Endothelial cell of umbilical vein (primary cell): ENCODE measurements at regions of chr15 and their contacts with region 1.

Region 1: DNA sequence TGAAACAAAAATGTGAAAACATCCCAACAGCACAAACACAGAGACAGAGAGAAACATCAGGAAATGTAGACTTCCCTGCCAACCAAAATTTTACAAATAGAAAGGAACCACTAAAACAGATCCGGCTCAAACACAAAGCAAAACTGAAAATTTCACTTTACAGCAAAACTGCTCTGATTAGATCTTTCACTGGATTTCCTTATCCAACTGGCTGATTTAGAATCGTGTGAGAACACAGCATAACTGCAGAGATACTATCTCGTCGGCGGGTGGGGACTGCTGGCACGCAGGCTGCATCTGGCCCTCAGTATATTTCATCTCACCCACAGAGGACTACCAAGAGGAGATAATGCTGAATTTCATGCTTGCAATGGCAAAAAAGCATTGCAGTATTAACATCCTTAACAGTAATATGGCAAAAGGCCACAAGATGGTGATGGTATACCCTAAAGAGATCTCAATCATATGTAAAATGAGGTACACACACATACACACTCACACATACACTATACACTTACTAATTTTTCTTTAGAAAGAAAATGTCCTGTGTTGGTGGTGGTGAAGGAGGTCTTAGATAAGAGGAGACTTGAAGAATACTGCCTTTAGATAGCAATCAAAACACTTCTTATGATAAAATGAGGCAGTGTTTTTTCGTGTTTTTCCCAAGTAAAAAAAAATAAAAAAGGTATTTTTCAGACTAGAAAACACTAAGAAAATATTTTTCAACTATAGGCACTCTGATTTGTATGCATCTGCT is 10.6 kb upstream of the LEO1 start:
- DNase-seq: peak; percentile 94
- H3K4me3 ChIP-seq: peak overlapping the region; percentile 5 to 77 (median 10)
- H3K27ac ChIP-seq: peak overlapping the region; percentile 96
- H3K4me1 ChIP-seq: peaks cover 20% of the 10 kb centered on the region
- H3K27me3 ChIP-seq: no peaks in the 10 kb centered on the region
- CTCF ChIP-seq: peak in 1 of 2 donors; percentile 56
- POLR2A ChIP-seq: peak; percentile 38

Region 2: DNA sequence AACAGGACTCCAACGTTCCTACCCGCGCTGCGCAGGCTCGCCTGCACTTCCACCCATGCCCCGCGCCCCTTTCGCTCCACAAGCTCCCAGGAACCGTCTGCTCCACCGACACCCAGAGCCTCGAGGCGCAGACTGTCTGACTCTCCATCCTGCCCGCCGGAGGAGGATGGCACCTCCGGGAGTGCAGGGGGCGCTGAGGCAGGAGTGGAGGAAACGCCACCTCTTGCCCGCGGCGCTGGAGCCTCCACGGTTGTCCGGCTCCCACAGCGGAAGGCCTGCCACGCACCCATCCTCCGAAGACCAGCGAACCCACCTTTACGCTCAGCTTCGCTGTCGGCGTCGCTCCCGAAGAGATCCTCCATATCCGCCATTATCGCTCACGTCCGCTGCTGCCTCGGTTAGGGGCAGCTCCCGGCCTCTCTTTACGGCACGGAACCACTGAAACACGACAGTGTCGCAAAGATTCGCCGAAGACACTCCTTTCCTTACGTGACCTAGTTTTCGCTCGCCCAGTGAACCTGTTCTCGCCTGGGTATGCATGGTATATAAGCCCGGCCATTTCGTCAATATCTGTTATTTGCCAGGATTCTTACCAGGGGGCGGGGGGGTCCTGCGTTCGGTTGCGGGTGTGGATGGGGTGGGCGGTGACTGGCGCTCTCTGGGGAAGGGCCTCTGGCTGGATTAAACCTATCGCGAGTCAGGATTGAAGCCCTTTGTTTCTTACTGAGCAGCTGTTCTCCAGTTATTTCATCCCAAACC is 10.6 kb before region 1 on chr15 and contains the start of gene LEO1:
- CTCF ChIA-PET with region 1: interaction called, 11 read pairs
- POLR2A ChIA-PET with region 1: interaction called, 16 read pairs
- dilution Hi-C with region 1: no loop called
- intact Hi-C with region 1: loop called (anchors 1 kb)
- DNase-seq: peak; percentile 97
- H3K4me3 ChIP-seq: peak within 1 kb of the TSS; percentile 54 to 81 (median 61)
- H3K27ac ChIP-seq: peak within 1 kb of the TSS; percentile 68
- H3K4me1 ChIP-seq: peaks cover 12% of the 10 kb centered on the region
- H3K27me3 ChIP-seq: no peaks in the 10 kb centered on the region
- CTCF ChIP-seq: peak in 1 of 2 donors; percentile 42
- POLR2A ChIP-seq: peak; percentile 92
- total RNA-seq, gene LEO1: 22.6 and 28.0 TPM in 2 replicates

Region 3: GRCh38 chr15:52005748-52006701 is 23.8 kb after region 1 on chr15:
- CTCF ChIA-PET with region 1: interaction called, 3 read pairs
- POLR2A ChIA-PET with region 1: no interaction called
- dilution Hi-C with region 1: no loop called
- intact Hi-C with region 1: loop called (anchors 1 kb)
- DNase-seq: peak; percentile 87
- H3K4me3 ChIP-seq: no peak overlapping the region
- H3K27ac ChIP-seq: peak overlapping the region; percentile 80
- H3K4me1 ChIP-seq: peaks cover 46% of the 10 kb centered on the region
- H3K27me3 ChIP-seq: no peaks in the 10 kb centered on the region
- CTCF ChIP-seq: no peak
- POLR2A ChIP-seq: no peak

Region 4: DNA sequence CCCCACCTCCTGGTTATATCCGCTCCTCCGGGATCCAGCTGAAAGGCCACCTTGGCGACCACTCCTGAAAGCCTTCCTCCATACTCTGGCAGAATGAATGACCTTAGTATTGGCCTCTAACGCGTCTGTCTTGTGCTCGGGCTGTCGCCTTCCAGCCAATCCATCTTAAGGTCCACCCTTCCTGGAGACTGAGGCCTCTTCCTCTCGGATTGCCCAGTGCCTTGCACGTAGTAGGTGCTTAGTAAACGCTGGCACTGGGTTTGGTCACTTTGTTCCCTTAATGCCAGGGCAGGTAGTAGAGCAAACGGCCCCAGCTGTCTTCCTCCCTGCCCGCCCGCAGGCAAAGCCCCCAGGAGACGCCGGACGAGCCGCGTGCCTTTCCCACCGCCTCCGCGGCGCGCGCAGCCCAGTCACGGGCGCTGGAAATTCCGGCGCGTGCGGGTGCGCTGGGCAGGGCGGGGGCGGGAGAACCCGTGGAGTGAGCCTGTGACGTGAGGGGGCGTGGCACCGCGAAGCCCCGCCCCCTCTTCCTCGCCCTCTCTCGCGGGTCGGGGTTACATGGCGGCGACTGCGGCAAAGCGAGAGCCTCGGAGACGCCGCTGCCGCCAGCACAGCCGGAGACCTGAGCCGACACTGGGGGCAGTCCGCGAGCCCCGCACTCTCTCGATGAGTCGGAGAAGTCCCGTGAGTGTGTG is 36.6 kb after region 1 on chr15 and contains the start of gene MAPK6:
- CTCF ChIA-PET with region 1: interaction called, 3 read pairs
- POLR2A ChIA-PET with region 1: interaction called, 4 read pairs
- dilution Hi-C with region 1: no loop called
- intact Hi-C with region 1: loop called (anchors 1 kb)
- DNase-seq: peak; percentile 93
- H3K4me3 ChIP-seq: peak within 1 kb of the TSS; percentile 73 to 99 (median 90)
- H3K27ac ChIP-seq: peak within 1 kb of the TSS; percentile 96
- H3K4me1 ChIP-seq: peaks cover 25% of the 10 kb centered on the region
- H3K27me3 ChIP-seq: no peaks in the 10 kb centered on the region
- CTCF ChIP-seq: no peak
- POLR2A ChIP-seq: peak; percentile 75
- total RNA-seq, gene MAPK6: 35.7 and 37.4 TPM in 2 replicates

Region 5: DNA sequence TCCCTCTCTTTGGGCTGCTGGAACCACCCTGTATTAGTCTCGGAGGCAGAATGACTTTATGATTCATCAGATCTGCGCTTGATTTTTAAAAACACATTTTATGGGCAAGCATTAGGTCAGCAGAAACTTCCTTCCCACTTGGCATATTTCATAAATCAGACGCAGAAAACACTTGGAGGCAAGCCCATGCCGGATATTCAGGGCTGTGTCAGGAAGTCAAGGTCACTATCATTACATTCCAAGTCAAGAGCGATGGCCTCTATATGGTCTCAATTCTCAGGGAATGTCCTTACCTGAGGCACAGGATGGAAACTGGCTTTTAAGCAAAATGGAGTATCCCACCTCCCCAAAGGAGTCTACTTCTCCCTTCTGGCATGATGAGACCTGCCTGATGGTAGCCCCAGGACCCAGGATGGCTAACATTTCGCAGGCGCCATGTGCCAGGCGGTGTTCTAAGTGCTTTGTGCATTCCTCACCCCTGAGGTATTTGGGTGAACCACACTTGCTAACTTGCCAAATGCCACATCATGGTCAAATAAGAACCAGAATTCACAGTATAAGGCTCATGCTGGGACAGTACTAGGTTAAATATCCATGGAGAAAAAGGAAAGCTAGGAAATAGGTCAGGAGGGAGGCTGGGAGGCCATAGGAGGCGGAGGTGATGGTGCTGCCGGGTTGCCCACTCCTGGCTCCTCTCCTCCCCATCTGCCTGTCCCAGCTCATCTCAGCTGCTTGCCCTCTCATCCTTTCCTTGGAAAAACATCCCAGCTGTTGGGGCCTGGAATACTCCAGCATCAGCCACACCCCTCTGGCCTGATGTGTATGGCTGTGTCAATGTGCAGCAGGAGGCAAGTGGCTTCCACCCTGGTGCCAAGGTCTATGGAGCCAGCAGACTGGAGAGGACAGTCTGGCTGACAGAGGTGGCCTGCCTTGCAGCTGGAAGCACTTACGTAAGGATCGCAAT is 111.6 kb after region 1 on chr15:
- CTCF ChIA-PET with region 1: no interaction called
- POLR2A ChIA-PET with region 1: no interaction called
- dilution Hi-C with region 1: no loop called
- intact Hi-C with region 1: loop called (anchors 5 kb)
- DNase-seq: peak; percentile 99
- H3K4me3 ChIP-seq: peak overlapping the region in 1 of 3 experiments; percentile 14
- H3K27ac ChIP-seq: peak overlapping the region; percentile 99
- H3K4me1 ChIP-seq: peaks cover 34% of the 10 kb centered on the region
- H3K27me3 ChIP-seq: no peaks in the 10 kb centered on the region
- CTCF ChIP-seq: no peak
- POLR2A ChIP-seq: peak; percentile 69

Region 6: DNA sequence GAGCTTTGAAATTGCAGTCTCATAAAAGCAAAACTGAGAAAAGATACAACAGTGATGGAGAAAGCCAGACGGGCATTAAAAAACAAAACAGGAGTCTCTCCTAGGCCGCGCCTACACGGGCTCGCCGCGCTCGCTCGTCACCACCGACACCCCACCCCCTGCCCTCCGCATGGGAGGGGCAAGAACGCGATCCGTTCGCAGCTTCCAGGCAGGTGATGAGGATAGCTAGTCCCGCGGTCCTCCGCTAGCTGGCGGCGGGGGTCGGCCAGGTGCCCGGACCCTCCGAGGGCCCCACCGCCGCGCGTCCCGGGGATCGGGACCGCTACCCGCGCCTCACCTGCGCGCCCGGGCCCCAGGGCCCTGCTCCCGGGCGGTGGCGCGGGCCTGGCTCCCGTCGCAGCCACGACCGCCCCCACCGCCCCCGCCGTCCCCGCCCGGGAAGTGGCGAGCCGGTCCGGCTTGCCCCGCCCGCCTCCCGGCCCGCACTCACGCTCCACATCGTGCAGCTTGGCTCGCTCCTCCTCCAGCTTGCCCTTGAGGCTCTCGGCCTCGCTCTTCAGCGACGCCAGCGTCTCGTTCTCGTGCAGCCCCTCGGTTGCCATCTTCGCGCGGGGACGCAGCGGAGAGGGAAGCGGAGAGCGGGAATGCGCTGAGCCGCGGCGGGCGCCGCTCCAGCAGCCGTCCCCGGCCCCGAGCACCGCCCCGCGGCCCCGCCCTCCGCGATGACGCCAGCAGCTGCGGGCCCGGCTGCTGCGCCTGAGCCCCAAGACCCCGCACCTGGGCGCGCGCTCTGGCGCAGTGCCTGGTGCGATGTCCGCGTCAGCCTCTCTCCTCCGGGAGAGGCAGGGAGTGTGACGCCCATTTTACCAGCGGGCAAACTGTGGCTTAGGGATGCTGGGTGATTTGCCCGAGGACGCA is 197.3 kb after region 1 on chr15:
- CTCF ChIA-PET with region 1: no interaction called
- POLR2A ChIA-PET with region 1: no interaction called
- dilution Hi-C with region 1: no loop called
- intact Hi-C with region 1: loop called (anchors 1 kb)
- DNase-seq: peak; percentile 82
- H3K4me3 ChIP-seq: peak overlapping the region; percentile 18 to 85 (median 70)
- H3K27ac ChIP-seq: peak overlapping the region; percentile 58
- H3K4me1 ChIP-seq: peaks cover 9% of the 10 kb centered on the region
- H3K27me3 ChIP-seq: no peaks in the 10 kb centered on the region
- CTCF ChIP-seq: no peak
- POLR2A ChIP-seq: peak; percentile 59

Region 7: GRCh38 chr15:52208306-52208946 is 226.2 kb after region 1 on chr15:
- CTCF ChIA-PET with region 1: interaction called, 5 read pairs
- POLR2A ChIA-PET with region 1: no interaction called
- dilution Hi-C with region 1: no loop called
- intact Hi-C with region 1: loop called (anchors 1 kb)
- DNase-seq: peak; percentile 73
- H3K4me3 ChIP-seq: no peak overlapping the region
- H3K27ac ChIP-seq: no peak overlapping the region
- H3K4me1 ChIP-seq: peaks cover 17% of the 10 kb centered on the region
- H3K27me3 ChIP-seq: no peaks in the 10 kb centered on the region
- CTCF ChIP-seq: peak; percentile 71 to 86
- POLR2A ChIP-seq: no peak